MCF 10A (cell line): ENCODE measurements at regions of chr1 and their contacts with region 1.

Region 1: GRCh38 chr1:43706598-43707495 is 489 bp upstream of the ST3GAL3 start:
- DNase-seq: peak; percentile 87
- H3K4me3 Mint-ChIP-seq: peak overlapping the region; percentile 82
- H3K27ac Mint-ChIP-seq: peak overlapping the region; percentile 54
- H3K4me1 Mint-ChIP-seq: peaks cover 26% of the 10 kb centered on the region
- H3K27me3 Mint-ChIP-seq: no peaks in the 10 kb centered on the region
- CTCF ChIP-seq: no peak

Region 2: GRCh38 chr1:43602990-43603389 is 103.9 kb before region 1 on chr1:
- CTCF ChIA-PET with region 1: no interaction called
- POLR2A ChIA-PET with region 1: no interaction called
- intact Hi-C with region 1: no loop called
- DNase-seq: no peak
- H3K4me3 Mint-ChIP-seq: no peak overlapping the region
- H3K27ac Mint-ChIP-seq: no peak overlapping the region
- H3K4me1 Mint-ChIP-seq: peaks cover 5% of the 10 kb centered on the region
- H3K27me3 Mint-ChIP-seq: no peaks in the 10 kb centered on the region
- CTCF ChIP-seq: no peak

Region 3: DNA sequence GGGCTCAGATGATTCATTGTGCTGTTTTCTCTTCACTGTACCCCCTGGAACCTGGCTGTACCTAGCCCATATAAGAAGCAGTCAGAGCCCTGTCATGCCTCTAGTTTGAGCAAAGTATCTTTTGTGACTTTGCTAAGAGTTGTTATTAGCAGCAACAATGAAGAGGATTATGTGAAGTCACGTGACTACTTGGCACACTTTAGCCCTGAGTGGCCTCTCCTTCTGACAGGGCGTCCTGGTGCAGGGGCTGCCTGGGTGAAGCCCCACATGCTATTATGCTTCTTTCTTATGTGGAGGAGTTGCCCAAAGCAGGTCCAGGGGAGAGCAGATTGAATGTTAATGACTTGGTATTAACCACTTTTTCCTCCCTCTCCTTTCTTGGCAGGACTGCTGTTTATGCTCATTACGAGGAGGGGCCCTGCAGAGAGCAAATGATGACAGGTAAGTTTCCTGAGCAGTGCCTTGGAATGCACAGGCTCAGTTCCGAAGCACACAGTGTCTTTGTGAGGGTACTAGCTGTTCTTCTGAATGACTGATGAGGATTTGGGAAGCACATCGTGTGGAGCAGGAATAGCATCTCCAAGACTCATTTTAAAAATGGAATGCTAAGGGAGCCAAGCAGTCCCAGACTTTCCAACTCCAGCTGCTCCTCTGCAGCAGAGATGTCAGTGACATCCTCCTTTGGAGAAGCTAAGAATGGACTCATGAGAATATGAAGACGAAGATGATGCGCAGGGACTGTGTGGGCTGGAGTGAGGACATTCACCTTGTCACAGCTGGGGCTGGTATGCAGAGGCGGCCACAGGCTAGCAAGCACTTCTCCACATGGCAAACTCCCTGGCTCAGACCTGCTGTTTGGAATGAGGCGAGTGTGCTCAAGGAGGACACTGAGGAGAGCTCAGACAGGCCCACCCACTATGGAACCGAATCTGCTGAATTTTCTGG is 14.7 kb before region 1 on chr1:
- CTCF ChIA-PET with region 1: interaction called, 3 read pairs
- POLR2A ChIA-PET with region 1: interaction called, 14 read pairs
- intact Hi-C with region 1: no loop called
- DNase-seq: no peak
- H3K4me3 Mint-ChIP-seq: no peak overlapping the region
- H3K27ac Mint-ChIP-seq: no peak overlapping the region
- H3K4me1 Mint-ChIP-seq: no peaks in the 10 kb centered on the region
- H3K27me3 Mint-ChIP-seq: no peaks in the 10 kb centered on the region
- CTCF ChIP-seq: no peak

Region 4: DNA sequence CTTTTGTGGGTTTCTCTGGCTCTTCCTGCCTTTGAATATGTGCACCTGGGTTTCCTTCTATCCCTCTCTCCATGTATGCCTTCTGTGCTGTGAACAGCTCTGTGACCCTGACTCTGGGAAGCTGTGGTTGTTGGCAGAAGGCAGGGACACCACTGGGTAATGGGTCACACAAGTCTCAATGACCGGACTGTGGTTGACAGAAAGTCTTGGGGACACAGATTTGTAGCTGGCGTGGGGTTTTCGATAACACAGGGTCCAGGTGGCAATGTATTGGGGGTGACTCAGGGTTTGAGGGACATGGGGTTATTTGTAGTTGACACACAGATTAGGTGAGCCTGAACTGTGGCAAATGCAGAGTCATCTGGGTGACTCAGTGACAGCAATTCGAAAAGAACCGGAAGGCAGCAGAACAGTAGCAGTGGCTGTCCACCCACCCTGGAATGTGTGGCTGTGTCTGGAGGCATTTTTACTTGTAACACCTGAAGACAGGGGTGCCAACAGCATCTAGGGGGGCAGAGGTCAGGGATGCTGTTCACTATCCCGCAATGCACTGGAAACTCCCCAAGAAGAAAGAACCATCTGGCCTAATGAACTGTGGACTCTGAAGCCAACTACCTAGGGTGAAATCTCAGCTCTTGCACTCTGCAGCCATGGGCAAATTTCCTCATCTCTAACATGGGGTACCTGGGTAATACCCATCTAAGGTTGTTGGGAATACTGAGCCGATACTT is 337.4 kb after region 1 on chr1:
- CTCF ChIA-PET with region 1: no interaction called
- POLR2A ChIA-PET with region 1: no interaction called
- intact Hi-C with region 1: no loop called
- DNase-seq: no peak
- H3K4me3 Mint-ChIP-seq: no peak overlapping the region
- H3K27ac Mint-ChIP-seq: no peak overlapping the region
- H3K4me1 Mint-ChIP-seq: peaks cover 28% of the 10 kb centered on the region
- H3K27me3 Mint-ChIP-seq: no peaks in the 10 kb centered on the region
- CTCF ChIP-seq: no peak